ENCODE measurements at regions of chr7 and their contacts with region 1.

Region 1: DNA sequence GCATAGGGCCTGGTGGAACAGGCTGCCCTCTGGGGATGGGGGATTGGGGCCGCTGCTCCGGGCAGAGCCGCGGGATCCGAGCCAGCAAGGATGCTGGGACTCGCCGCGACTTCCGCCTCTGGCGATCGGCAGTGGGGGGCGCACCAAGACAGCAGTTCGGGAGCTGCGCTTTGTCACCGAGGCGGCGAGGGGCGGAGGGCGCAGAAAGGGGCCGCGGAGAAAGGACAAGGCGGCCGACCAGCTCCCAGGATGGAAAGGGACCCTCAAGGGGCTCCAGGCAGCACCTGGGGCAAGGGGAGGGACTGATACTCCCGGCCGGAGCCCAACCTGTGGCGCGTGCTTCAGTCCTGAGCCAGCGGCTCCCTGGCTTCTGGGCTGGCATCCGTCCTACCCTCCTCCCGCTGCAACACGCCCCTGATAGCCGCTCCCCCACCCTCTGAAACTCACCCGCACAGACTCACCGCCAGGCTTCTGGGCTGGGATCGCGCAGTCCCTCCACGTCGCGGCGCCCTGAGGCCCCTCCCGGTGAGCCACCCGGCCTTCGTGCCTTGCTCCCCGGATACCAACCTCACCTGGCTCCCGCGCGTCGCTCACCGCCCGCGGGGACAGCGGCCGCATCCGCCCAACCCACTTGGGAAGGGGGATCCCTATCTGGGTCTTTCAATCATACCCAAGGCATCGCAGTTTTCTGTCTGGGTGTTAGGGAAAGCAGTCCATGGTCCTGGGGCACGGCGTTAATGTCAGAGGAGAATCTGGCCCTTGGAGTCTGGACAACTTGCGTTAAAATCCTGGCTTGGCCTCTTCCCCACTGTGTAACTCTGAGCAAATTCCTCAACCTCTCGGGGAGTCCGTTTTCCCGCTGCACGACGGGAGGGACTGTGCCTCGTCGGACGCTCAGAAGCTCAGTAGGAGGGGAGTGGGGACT is 7.0 kb upstream of the EVX1 start:
- DNase-seq: peak; percentile 75
- H3K4me3 ChIP-seq: peak overlapping the region; percentile 41
- H3K27ac ChIP-seq: no peak overlapping the region
- H3K4me1 ChIP-seq: no peaks in the 10 kb centered on the region
- H3K27me3 ChIP-seq: peaks cover 22% of the 10 kb centered on the region
- CTCF ChIP-seq: peak; percentile 45

Region 2: DNA sequence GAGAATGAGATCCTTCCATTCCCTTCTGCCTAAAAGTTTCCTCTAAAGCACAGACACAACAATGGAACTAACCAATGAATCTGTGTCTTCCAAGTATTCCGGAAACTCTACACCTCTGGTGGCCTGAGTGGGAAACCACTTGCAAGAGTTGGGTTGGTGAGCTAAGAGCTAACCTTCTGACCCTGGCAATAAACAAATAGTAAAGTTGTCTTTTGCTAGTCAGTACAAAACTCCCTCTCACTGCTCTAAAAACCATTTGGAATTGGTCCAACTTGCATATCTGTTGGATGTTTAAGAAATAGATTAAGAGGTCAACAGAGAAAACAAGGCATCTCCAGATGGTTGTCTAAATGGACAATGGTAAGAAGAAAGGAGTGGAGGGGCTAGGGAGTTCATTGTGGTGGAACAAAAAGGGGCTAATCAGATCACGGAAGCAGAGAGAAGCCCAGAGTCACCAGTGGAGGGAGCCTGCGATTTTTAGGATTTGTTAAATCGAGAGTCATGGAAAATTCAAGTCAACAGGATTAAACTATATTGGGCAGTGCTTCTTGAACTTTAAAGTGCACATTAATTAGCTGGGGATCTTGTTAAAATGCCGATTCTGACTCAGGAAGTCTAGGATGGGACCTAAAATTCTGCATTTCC is 199.2 kb after region 1 on chr7:
- intact Hi-C with region 1: no loop called
- DNase-seq: no peak
- H3K4me3 ChIP-seq: no peak overlapping the region
- H3K27ac ChIP-seq: no peak overlapping the region
- H3K4me1 ChIP-seq: no peaks in the 10 kb centered on the region
- H3K27me3 ChIP-seq: no peaks in the 10 kb centered on the region
- CTCF ChIP-seq: no peak

Region 3: DNA sequence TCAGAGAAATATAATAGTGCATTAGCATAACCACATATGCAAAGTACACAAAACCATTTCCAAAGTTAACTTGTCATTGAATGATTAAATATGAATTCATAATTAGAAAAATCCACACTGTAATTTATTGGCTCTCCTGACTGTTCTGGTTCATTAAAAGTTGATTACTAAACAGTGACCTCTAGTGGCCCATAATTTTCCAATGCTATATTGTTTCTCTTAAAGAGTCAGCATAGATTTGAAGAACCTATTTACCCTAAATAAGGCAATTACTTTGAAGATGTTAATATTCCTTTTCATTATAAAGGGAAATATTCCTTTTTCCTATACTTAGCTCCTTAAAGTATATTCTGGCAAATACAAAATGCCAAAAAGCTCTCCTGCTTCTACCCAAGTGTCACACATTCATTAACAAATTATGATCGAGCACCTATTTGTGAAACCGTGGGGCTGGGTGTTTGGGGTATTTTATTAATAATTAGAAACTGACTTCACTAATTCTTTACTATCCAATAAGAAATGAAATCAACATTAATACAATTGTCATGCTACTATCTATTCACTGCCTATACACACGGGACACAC is 340.8 kb after region 1 on chr7:
- intact Hi-C with region 1: loop called (anchors 5 kb)
- DNase-seq: no peak
- H3K4me3 ChIP-seq: no peak overlapping the region
- H3K27ac ChIP-seq: no peak overlapping the region
- H3K4me1 ChIP-seq: no peaks in the 10 kb centered on the region
- H3K27me3 ChIP-seq: no peaks in the 10 kb centered on the region
- CTCF ChIP-seq: peak; percentile 59

Measured in colonic mucosa (tissue), 4 donors.